ENCODE measurements at regions of chr13 and their contacts with region 1.

Region 1: GRCh38 chr13:41054212-41054877 is 7.0 kb upstream of the WBP4 start:
- DNase-seq: peak; percentile 73
- ATAC-seq: peak; percentile 72
- H3K4me3 Mint-ChIP-seq: peak overlapping the region; percentile 6
- H3K27ac Mint-ChIP-seq: no peak overlapping the region
- H3K4me1 Mint-ChIP-seq: peaks cover 56% of the 10 kb centered on the region
- H3K27me3 Mint-ChIP-seq: no peaks in the 10 kb centered on the region

Region 2: GRCh38 chr13:40992678-40993518 is 61.4 kb before region 1 on chr13:
- CTCF ChIA-PET with region 1: interaction called, 15 read pairs
- POLR2A ChIA-PET with region 1: no interaction called
- DNase-seq: no peak
- ATAC-seq: no peak
- H3K4me3 Mint-ChIP-seq: peak overlapping the region; percentile 8
- H3K27ac Mint-ChIP-seq: peak overlapping the region; percentile 87
- H3K4me1 Mint-ChIP-seq: peaks cover 78% of the 10 kb centered on the region
- H3K27me3 Mint-ChIP-seq: no peaks in the 10 kb centered on the region

Region 3: GRCh38 chr13:41019011-41019487 is 35.3 kb before region 1 on chr13 and contains the start of gene ELF1:
- CTCF ChIA-PET with region 1: interaction called, 48 read pairs
- POLR2A ChIA-PET with region 1: interaction called, 19 read pairs
- DNase-seq: peak; percentile 78
- ATAC-seq: peak; percentile 91
- H3K4me3 Mint-ChIP-seq: peak within 1 kb of the TSS; percentile 89
- H3K27ac Mint-ChIP-seq: peak within 1 kb of the TSS; percentile 99
- H3K4me1 Mint-ChIP-seq: peaks cover 42% of the 10 kb centered on the region
- H3K27me3 Mint-ChIP-seq: no peaks in the 10 kb centered on the region
- total RNA-seq, gene ELF1: 106 to 107 TPM

Region 4: DNA sequence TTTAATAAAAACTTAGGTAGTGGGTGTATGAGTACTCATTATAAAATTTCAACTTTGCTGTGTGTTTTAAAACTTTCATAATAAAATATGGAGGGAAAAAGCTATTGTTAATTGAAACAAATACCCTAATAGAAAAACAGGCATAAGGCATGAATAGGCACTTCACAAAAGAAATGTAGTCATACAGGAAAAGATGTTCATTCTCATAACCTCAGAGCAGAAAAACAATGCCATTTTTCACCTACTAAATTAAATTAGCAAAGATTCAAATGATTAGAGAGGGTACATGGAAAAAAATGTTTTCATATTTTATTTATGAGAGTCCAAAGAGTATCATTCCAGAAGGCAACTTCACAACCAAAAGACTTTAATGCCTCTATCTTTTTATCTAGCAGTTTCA is 14.6 kb before region 1 on chr13:
- CTCF ChIA-PET with region 1: interaction called, 14 read pairs
- POLR2A ChIA-PET with region 1: no interaction called
- DNase-seq: no peak
- ATAC-seq: no peak
- H3K4me3 Mint-ChIP-seq: no peak overlapping the region
- H3K27ac Mint-ChIP-seq: no peak overlapping the region
- H3K4me1 Mint-ChIP-seq: no peaks in the 10 kb centered on the region
- H3K27me3 Mint-ChIP-seq: no peaks in the 10 kb centered on the region

Region 5: GRCh38 chr13:41196620-41197019 is 142.3 kb after region 1 on chr13:
- CTCF ChIA-PET with region 1: interaction called, 14 read pairs
- POLR2A ChIA-PET with region 1: no interaction called
- DNase-seq: no peak
- ATAC-seq: no peak
- H3K4me3 Mint-ChIP-seq: no peak overlapping the region
- H3K27ac Mint-ChIP-seq: no peak overlapping the region
- H3K4me1 Mint-ChIP-seq: peaks cover 32% of the 10 kb centered on the region
- H3K27me3 Mint-ChIP-seq: no peaks in the 10 kb centered on the region